ENCODE measurements at regions of chr20 and their contacts with region 1.

Region 1: DNA sequence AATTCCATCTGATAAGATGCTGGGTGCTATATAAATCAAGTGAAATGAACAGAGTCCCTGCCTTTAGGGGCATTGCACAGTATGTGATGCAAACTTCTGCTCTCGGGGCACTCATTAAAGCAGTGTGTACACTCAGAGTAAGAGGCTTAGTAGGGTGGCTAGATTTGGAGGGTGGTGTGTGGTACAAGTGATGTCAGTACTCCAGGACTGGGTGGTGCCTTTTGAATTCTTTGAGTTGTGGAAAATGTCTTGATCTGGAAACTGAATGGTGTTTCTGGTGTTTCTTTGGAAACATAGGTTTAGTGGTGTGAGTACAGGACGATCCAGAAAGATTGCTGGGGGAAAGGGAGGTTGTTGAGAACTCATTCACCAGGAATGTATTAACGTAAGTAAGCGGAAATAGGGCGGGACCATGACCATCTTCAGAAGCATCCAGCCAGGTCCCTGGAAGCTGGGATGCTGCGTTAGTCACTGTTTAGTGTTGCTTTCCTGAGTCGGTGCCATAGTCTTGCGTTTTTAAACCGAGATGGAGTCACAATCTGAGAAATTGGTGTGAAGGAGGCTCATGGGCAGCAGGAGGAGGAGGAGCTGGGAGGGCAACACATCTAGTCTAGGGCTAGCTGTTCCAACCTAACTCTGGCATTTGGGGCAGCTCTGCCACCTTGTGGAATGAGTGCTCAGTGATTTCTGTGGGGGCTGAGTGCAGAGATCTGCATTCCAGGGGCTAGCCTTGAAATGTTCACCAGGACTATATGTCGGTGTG is 70.3 kb downstream of the SCAND1 start:
- DNase-seq: peak; percentile 52
- H3K4me3 ChIP-seq: no peak overlapping the region
- H3K27ac ChIP-seq: peak overlapping the region; percentile 29
- H3K4me1 ChIP-seq: peaks cover 25% of the 10 kb centered on the region
- H3K27me3 ChIP-seq: no peaks in the 10 kb centered on the region
- CTCF ChIP-seq: peak; percentile 83

Region 2: DNA sequence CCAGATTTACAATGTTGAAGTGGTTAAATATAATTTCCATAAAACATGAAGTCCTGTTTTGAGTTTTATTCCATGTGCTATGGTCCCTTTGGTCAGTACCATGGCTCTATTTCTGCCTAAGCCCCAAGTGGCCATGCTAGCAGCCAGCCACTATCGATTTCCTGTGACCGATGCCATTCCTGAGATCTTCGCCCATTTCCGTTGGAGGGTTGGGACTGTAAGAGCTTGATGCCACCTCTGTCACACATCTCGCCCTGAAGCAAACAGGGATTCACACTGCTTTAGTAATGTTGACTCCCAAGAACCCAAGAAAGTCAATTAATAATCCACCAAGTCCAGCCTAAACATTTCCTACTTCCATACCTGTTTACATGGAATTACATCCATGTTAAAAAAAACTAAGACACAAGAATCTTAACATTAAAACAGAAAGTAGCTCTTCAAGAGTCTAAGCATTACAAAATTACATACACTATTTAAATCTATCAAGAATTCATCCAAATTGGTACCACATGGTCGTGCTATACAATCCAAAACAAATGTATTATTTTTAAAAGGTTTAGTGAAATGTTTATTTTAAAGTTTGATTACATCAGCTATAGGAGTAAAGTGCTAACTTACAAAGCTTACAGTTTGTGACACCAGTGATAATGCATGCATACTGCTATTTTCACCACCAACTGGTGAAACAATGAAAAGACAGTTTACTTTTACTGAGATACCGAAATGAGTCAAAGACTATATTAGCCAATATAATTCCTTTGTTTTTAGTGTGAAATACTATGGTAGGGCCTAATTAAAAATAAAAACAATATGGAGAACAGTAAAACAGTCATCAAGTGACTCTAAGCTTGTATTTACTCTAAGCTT is 144.4 kb before region 1 on chr20:
- intact Hi-C with region 1: loop called (anchors 10 kb)
- DNase-seq: no peak
- H3K4me3 ChIP-seq: peak overlapping the region; percentile 93
- H3K27ac ChIP-seq: peak overlapping the region; percentile 99
- H3K4me1 ChIP-seq: peaks cover 90% of the 10 kb centered on the region
- H3K27me3 ChIP-seq: no peaks in the 10 kb centered on the region
- CTCF ChIP-seq: peak; percentile 25

Region 3: DNA sequence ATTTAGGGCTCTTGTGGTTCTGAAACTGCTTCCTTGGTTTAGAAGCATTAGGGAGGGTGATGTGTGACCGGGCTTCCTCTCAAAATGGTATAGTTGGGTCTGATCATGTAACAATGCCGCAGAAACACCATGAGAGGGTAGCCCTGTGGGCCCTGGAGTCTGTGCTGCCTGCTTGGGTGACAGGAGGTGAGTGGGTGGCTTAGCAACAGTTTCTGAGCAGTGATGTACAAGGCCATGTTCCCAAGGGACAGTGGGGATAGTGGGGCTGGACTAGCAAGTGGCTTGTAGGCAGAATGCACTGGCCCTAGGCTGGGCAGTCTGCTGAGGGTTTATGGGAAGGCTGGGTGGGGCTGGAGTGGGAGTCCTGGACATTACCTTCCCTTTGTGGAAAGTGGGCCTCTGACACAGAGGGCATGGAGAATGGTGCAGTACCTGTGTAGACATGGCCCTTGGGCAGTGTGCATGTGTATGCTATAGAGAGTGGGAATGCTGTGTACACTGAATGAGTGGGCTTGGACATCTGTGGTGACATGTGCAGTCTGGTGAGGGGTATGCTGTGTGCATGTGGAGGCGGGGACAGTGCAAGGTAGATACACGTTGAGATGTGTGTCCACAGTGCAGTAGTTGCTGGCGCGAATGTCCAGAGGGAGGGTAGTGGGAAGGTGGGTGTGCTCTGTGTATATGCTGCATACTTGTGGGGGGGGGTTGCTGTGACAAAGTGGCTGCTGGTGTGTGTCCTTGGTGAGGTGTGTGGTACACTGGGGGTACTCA is 550.6 kb after region 1 on chr20:
- intact Hi-C with region 1: no loop called
- DNase-seq: no peak
- H3K4me3 ChIP-seq: no peak overlapping the region
- H3K27ac ChIP-seq: no peak overlapping the region
- H3K4me1 ChIP-seq: peaks cover 7% of the 10 kb centered on the region
- H3K27me3 ChIP-seq: peaks cover 43% of the 10 kb centered on the region
- CTCF ChIP-seq: no peak